WTC11 (cell line): ENCODE measurements at regions of chr1 and their contacts with region 1.

Region 1: GRCh38 chr1:222071387-222071786 is 329.5 kb upstream of the DUSP10 start:
- DNase-seq: no peak
- ATAC-seq: peak; percentile 76
- H3K4me3 Mint-ChIP-seq: no peak overlapping the region
- H3K27ac Mint-ChIP-seq: peak overlapping the region; percentile 90
- H3K4me1 Mint-ChIP-seq: peaks cover 12% of the 10 kb centered on the region; the same call in 1 of the 2 replicates
- H3K27me3 Mint-ChIP-seq: no peaks in the 10 kb centered on the region
- CTCF ChIP-seq: no peak

Region 2: GRCh38 chr1:221741711-221742554 is 329.5 kb before region 1 on chr1 and contains the start of gene DUSP10:
- CTCF ChIA-PET with region 1: no interaction called
- POLR2A ChIA-PET with region 1: no interaction called
- DNase-seq: peak; percentile 99
- ATAC-seq: peak; percentile 91
- H3K4me3 Mint-ChIP-seq: no peak within 1 kb of the TSS; the same call in 1 of the 2 replicates
- H3K27ac Mint-ChIP-seq: no peak within 1 kb of the TSS
- H3K4me1 Mint-ChIP-seq: peaks cover 17% of the 10 kb centered on the region
- H3K27me3 Mint-ChIP-seq: no peaks in the 10 kb centered on the region; the same call in 1 of the 2 replicates
- CTCF ChIP-seq: no peak
- total RNA-seq, gene DUSP10: 1.6 to 2.2 TPM (median 2.0 TPM) in 3 replicates

Region 3: GRCh38 chr1:221868593-221869303 is 202.6 kb before region 1 on chr1:
- CTCF ChIA-PET with region 1: no interaction called
- POLR2A ChIA-PET with region 1: no interaction called
- DNase-seq: no peak
- ATAC-seq: no peak
- H3K4me3 Mint-ChIP-seq: no peak overlapping the region
- H3K27ac Mint-ChIP-seq: no peak overlapping the region
- H3K4me1 Mint-ChIP-seq: no peaks in the 10 kb centered on the region
- H3K27me3 Mint-ChIP-seq: no peaks in the 10 kb centered on the region
- CTCF ChIP-seq: no peak

Region 4: GRCh38 chr1:222095606-222096475 is 24.5 kb after region 1 on chr1:
- CTCF ChIA-PET with region 1: interaction called, 11 read pairs
- POLR2A ChIA-PET with region 1: no interaction called
- DNase-seq: peak; percentile 72
- ATAC-seq: peak; percentile 88
- H3K4me3 Mint-ChIP-seq: no peak overlapping the region
- H3K27ac Mint-ChIP-seq: no peak overlapping the region
- H3K4me1 Mint-ChIP-seq: no peaks in the 10 kb centered on the region; the same call in 1 of the 2 replicates
- H3K27me3 Mint-ChIP-seq: no peaks in the 10 kb centered on the region
- CTCF ChIP-seq: no peak; the same call in none of the 2 replicates